H1 (cell line): ENCODE measurements at regions of chr2 and their contacts with region 1.

Region 1: GRCh38 chr2:39403311-39403710 is 33.8 kb downstream of the MAP4K3 start:
- DNase-seq: no peak
- H3K4me3 ChIP-seq: no peak overlapping the region
- H3K27ac ChIP-seq: no peak overlapping the region
- H3K4me1 ChIP-seq: peaks cover 0 to 20% (median 6%) of the 10 kb centered on the region in 4 experiments; a peak in 6 of 7 replicates
- H3K27me3 ChIP-seq: no peaks in the 10 kb centered on the region
- CTCF ChIP-seq: peak in 1 of 3 experiments; percentile 8; a peak in 1 of 4 replicates
- EP300 ChIP-seq: no peak
- POLR2A ChIP-seq: no peak
- RAD21 ChIP-seq: no peak

Region 2: GRCh38 chr2:39379643-39380524 is 23.4 kb before region 1 on chr2:
- CTCF ChIA-PET with region 1: interaction called, 10 read pairs
- POLR2A ChIA-PET with region 1: no interaction called
- DNase-seq: no peak
- H3K4me3 ChIP-seq: no peak overlapping the region
- H3K27ac ChIP-seq: no peak overlapping the region
- H3K4me1 ChIP-seq: peaks cover 3 to 6% (median 4%) of the 10 kb centered on the region in 4 experiments; a peak in 6 of 7 replicates
- H3K27me3 ChIP-seq: peaks cover 0 to 1% (median 0%) of the 10 kb centered on the region in 4 experiments; a peak in 1 of 7 replicates
- CTCF ChIP-seq: peak in 2 of 3 experiments; percentile 29 to 35; a peak in 2 of 4 replicates
- EP300 ChIP-seq: no peak
- POLR2A ChIP-seq: no peak
- RAD21 ChIP-seq: peak; percentile 39 to 44; a peak in 3 of 4 replicates

Region 3: GRCh38 chr2:39392672-39393071 is 10.6 kb before region 1 on chr2:
- CTCF ChIA-PET with region 1: interaction called, 10 read pairs
- POLR2A ChIA-PET with region 1: interaction called, 6 read pairs
- DNase-seq: no peak
- H3K4me3 ChIP-seq: no peak overlapping the region
- H3K27ac ChIP-seq: no peak overlapping the region
- H3K4me1 ChIP-seq: peaks cover 2 to 3% (median 3%) of the 10 kb centered on the region in 4 experiments; a peak in 3 of 7 replicates
- H3K27me3 ChIP-seq: no peaks in the 10 kb centered on the region
- CTCF ChIP-seq: no peak
- EP300 ChIP-seq: no peak
- POLR2A ChIP-seq: no peak
- RAD21 ChIP-seq: no peak

Region 4: DNA sequence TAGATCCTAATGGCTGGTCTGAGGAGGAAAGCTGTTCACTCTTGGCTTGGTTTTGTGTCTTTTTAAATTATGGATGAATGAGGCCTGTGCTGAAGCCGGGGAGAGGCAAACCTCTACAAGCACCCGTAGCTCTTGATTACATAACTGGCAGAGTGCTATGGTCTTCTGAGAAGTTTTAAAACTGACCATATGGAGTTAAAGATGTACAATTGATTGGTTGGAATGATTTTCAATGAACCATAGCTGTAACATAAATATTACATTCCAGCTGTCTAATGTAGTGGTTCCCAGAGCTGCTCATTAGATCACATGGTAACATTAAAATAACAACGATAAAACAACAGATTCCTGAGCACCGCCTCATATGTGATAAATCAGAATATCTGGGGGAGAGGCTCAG is 104.9 kb after region 1 on chr2:
- CTCF ChIA-PET with region 1: no interaction called
- POLR2A ChIA-PET with region 1: no interaction called
- DNase-seq: no peak
- H3K4me3 ChIP-seq: no peak overlapping the region
- H3K27ac ChIP-seq: no peak overlapping the region
- H3K4me1 ChIP-seq: peaks cover 2 to 11% (median 6%) of the 10 kb centered on the region in 4 experiments; a peak in 5 of 7 replicates
- H3K27me3 ChIP-seq: no peaks in the 10 kb centered on the region
- CTCF ChIP-seq: no peak
- EP300 ChIP-seq: no peak
- POLR2A ChIP-seq: no peak
- RAD21 ChIP-seq: no peak